IMR-90 (cell line): ENCODE measurements at regions of chr5 and their contacts with region 1.

Region 1: DNA sequence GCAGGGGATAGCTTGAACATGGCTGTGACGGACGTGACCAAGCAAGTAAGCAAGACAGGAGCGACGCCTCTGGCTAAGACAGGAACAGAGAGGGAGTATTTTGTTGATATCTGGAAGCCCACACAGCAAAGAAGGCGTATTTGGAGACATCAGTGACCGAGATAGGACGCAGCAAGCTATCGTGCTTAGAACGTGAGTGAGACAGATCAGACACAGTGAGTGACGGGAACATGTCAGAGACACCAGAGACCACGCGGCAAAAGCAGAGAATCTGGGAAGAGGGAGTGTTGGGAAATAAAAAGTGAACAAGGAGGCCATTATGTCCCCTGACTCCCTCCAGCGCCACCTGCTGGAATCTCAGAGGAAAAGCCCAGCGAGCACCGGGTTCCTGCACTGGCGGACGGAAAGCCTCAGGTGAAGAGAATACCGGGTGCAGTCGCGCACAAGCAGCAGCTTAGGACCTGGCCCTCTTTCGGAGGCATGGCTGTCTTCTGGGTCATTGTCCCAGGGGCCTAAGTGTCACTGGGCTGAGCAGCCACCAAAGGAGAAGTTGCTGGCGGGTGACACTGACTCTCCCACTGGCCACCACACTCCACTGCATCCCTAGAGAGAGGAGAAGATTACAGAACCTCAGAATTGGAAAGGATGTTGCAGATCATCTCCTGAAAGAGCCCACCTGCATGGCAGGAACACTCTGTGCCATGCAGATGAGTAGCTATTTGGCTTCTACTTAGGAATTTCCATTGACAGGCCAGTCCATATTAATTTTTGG is 99.1 kb downstream of the FBXO38 start:
- DNase-seq: peak; percentile 34
- ATAC-seq: peak; percentile 75
- H3K4me3 ChIP-seq: no peak overlapping the region
- H3K27ac ChIP-seq: no peak overlapping the region
- H3K4me1 ChIP-seq: no peaks in the 10 kb centered on the region
- H3K27me3 ChIP-seq: peaks cover 15% of the 10 kb centered on the region
- CTCF ChIP-seq: peak; percentile 62
- POLR2A ChIP-seq: no peak
- RAD21 ChIP-seq: peak; percentile 44

Region 2: GRCh38 chr5:148179234-148179824 is 303.5 kb before region 1 on chr5:
- CTCF ChIA-PET with region 1: no interaction called
- POLR2A ChIA-PET with region 1: no interaction called
- dilution Hi-C with region 1: no loop called
- in situ Hi-C with region 1: no loop called
- intact Hi-C with region 1: loop called (anchors 1 kb)
- DNase-seq: peak; percentile 63
- ATAC-seq: peak; percentile 72
- H3K4me3 ChIP-seq: no peak overlapping the region
- H3K27ac ChIP-seq: no peak overlapping the region
- H3K4me1 ChIP-seq: no peaks in the 10 kb centered on the region
- H3K27me3 ChIP-seq: no peaks in the 10 kb centered on the region
- CTCF ChIP-seq: peak; percentile 65
- POLR2A ChIP-seq: no peak
- RAD21 ChIP-seq: peak; percentile 78

Region 3: DNA sequence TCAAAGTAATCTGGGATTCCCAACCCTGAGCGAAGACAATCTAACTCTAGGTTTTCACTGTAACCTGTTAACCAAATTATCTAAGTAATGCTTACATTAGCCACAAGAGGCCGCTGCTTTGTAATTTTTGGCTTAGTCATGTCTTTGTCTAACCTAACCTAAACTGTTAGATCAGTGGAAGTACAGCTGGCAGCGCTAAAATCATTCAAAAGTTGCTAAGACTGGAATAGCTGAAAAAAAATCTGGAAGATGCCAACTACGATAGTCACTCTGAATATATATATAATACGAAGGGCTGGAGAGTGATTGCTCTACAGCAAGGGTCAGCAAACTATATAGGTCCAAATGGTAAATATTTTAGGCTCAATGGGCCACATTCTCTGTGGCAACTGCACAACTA is 38.9 kb before region 1 on chr5:
- CTCF ChIA-PET with region 1: interaction called, 11 read pairs
- POLR2A ChIA-PET with region 1: no interaction called
- dilution Hi-C with region 1: no loop called
- in situ Hi-C with region 1: no loop called
- intact Hi-C with region 1: loop called (anchors 1 kb)
- DNase-seq: peak; percentile 78
- ATAC-seq: peak; percentile 89
- H3K4me3 ChIP-seq: no peak overlapping the region
- H3K27ac ChIP-seq: no peak overlapping the region
- H3K4me1 ChIP-seq: no peaks in the 10 kb centered on the region
- H3K27me3 ChIP-seq: peaks cover 3% of the 10 kb centered on the region; the same call in 1 of the 2 replicates
- CTCF ChIP-seq: peak; percentile 77
- POLR2A ChIP-seq: no peak
- RAD21 ChIP-seq: peak; percentile 68

Region 4: GRCh38 chr5:148469501-148469935 is 13.4 kb before region 1 on chr5:
- CTCF ChIA-PET with region 1: no interaction called
- POLR2A ChIA-PET with region 1: no interaction called
- dilution Hi-C with region 1: no loop called
- in situ Hi-C with region 1: no loop called
- intact Hi-C with region 1: loop called (anchors 1 kb)
- DNase-seq: peak; percentile 76
- ATAC-seq: peak; percentile 79
- H3K4me3 ChIP-seq: no peak overlapping the region
- H3K27ac ChIP-seq: no peak overlapping the region
- H3K4me1 ChIP-seq: peaks cover 4% of the 10 kb centered on the region; the same call in 1 of the 2 replicates
- H3K27me3 ChIP-seq: no peaks in the 10 kb centered on the region; the same call in 1 of the 2 replicates
- CTCF ChIP-seq: no peak
- POLR2A ChIP-seq: no peak
- RAD21 ChIP-seq: no peak

Region 5: GRCh38 chr5:150398722-150399523 is 1916.0 kb after region 1 on chr5:
- CTCF ChIA-PET with region 1: no interaction called
- POLR2A ChIA-PET with region 1: no interaction called
- dilution Hi-C with region 1: no loop called
- in situ Hi-C with region 1: no loop called
- intact Hi-C with region 1: no loop called
- DNase-seq: no peak
- ATAC-seq: no peak
- H3K4me3 ChIP-seq: no peak overlapping the region
- H3K27ac ChIP-seq: peak overlapping the region; percentile 39; the same call in 1 of the 2 replicates
- H3K4me1 ChIP-seq: peaks cover 19% of the 10 kb centered on the region
- H3K27me3 ChIP-seq: no peaks in the 10 kb centered on the region
- CTCF ChIP-seq: peak; percentile 20; the same call in 1 of the 2 replicates
- POLR2A ChIP-seq: no peak
- RAD21 ChIP-seq: no peak